Activated CD4-positive, alpha-beta T cell treated with anti-CD3 and anti-CD28 coated beads, Interleukin-2, amount 10 ng/mL, durations not matched to agents 7 days and 5 days (primary cell): ENCODE measurements at regions of chr2 and their contacts with region 1.

Region 1: DNA sequence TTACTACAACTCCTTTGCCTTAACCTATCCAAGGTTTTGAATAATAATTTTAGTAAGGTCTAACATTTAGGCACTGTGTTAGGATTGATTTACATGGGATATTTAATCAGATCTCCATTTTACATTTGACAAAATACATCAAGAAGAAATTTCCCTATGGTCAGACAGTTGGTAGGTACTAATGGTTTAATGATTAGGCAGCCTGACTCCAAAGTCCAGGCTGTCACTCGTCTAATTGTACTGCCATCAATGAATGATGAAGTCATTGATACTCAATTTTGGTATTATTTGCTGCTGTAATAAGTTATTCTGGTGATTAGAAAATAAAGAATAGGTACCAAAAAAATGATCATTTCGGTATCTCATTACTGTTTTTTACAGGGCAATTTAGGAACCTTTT is 14.1 kb downstream of the BBS5 start:
- DNase-seq: no peak
- H3K4me3 Mint-ChIP-seq: no peak overlapping the region
- H3K27ac Mint-ChIP-seq: no peak overlapping the region
- H3K4me1 Mint-ChIP-seq: no peaks in the 10 kb centered on the region
- H3K27me3 Mint-ChIP-seq: no peaks in the 10 kb centered on the region

Region 2: DNA sequence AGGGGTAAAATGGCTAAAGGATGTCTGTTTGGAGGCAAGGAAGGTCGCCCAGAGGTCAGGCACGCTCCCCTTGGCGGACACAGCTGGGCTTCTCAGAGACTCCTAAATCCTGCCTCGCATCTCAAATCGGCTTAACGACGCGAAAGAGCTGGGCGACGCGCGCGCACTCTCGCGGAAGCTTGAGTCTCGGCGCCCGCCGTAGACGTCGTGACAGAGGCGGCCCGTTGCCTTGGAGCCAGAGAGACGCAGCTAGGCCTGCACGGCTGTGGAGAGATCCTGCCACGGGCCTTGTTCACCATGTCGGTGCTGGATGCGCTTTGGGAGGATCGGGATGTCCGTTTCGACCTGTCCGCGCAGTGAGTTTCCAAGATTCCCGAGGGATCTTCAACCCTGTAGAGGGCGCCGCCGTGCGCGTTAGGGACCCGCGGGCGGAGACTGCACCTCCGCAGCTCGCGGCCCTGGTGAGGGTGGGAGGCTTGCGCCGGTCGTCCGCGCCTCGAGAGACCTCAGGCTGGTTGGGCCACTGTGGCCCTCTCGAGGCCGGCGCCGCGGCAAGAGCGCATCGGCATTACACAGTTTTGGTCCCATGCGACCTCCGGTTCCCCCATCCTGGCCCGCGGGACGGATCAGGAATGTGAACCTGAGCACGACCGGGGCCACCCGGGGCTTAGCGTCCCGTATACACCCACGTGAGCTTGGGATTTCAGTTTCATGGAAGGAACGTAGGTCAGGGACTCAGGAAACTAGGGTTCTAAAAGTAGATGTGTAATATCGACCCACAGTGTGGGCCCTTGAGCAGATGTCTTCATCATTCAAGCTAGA is 13.9 kb before region 1 on chr2 and contains the start of gene BBS5:
- CTCF ChIA-PET with region 1: interaction called, 10 read pairs
- POLR2A ChIA-PET with region 1: no interaction called
- DNase-seq: peak; percentile 79
- H3K4me3 Mint-ChIP-seq: peak within 1 kb of the TSS; percentile 84
- H3K27ac Mint-ChIP-seq: peak within 1 kb of the TSS; percentile 65
- H3K4me1 Mint-ChIP-seq: peaks cover 18% of the 10 kb centered on the region
- H3K27me3 Mint-ChIP-seq: no peaks in the 10 kb centered on the region
- total RNA-seq, gene BBS5: 1.3 to 1.4 TPM